ENCODE measurements at regions of chr3 and their contacts with region 1.

Region 1: DNA sequence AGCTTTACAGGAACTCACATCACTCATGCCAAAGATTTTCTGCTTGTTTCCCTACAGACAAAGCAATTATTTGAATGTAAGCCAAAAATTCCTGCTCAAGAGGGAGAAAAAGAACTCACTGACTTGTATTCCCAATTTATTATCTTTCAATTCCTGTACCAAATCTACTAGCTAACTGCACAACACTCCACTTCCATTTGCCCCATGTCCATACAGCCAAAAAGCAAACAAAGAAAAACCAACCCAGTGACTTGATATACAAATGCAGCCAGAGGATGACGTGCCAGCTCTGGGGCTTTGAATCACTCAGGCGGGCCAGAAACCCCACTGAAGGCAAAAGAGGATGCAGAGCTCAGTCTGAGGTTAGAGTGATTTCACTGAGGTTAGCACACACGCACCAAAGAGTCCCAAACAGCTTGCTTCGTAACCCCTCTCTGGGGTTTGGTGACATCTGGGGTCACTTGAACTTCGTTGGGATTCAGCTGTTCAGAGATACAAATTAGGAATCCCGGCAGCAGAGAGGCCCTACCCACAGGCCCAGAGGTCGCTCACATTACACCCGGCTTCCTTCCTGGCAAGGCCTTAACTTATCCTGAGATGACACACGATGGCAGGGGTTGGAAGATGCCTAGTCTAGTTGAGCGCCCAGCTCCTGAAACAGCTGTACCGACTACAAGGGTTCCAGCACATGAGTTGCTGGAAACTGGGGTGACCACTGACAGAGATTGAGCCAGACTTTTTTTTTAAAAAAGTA is 1.6 kb downstream of the RFTN1 start:
- DNase-seq: peak; percentile 92
- H3K4me3 Mint-ChIP-seq: peak overlapping the region; percentile 94
- H3K27ac Mint-ChIP-seq: peak overlapping the region; percentile 96
- H3K4me1 Mint-ChIP-seq: peaks cover 74% of the 10 kb centered on the region
- H3K27me3 Mint-ChIP-seq: no peaks in the 10 kb centered on the region

Region 2: DNA sequence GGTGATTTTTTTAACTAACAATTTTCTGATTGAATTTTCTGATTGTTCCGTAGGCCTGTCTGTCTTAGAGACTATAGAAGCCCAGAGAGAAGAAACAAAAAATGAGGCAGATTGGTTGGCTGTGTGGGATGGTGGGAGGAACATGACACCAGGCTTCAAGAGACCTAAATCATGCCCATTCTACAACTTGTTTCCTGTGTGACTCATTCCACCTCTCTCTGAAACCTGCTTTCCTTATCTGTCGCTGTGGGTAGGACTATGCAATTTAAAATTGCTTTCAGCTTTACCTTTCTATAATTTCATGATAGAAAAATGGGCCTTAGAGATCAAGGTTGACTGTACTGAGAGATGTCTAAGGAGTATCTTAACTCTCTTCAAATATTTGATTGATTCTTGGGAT is 202.3 kb before region 1 on chr3:
- CTCF ChIA-PET with region 1: interaction called, 3 read pairs
- POLR2A ChIA-PET with region 1: interaction called, 7 read pairs
- intact Hi-C with region 1: loop called (anchors 1 kb)
- DNase-seq: peak; percentile 76
- H3K4me3 Mint-ChIP-seq: peak overlapping the region; percentile 33
- H3K27ac Mint-ChIP-seq: peak overlapping the region; percentile 84
- H3K4me1 Mint-ChIP-seq: peaks cover 91% of the 10 kb centered on the region
- H3K27me3 Mint-ChIP-seq: no peaks in the 10 kb centered on the region

Region 3: GRCh38 chr3:16399473-16399872 is 112.4 kb before region 1 on chr3:
- CTCF ChIA-PET with region 1: no interaction called
- POLR2A ChIA-PET with region 1: no interaction called
- intact Hi-C with region 1: no loop called
- DNase-seq: no peak
- H3K4me3 Mint-ChIP-seq: no peak overlapping the region
- H3K27ac Mint-ChIP-seq: no peak overlapping the region
- H3K4me1 Mint-ChIP-seq: peaks cover 22% of the 10 kb centered on the region
- H3K27me3 Mint-ChIP-seq: no peaks in the 10 kb centered on the region

Region 4: DNA sequence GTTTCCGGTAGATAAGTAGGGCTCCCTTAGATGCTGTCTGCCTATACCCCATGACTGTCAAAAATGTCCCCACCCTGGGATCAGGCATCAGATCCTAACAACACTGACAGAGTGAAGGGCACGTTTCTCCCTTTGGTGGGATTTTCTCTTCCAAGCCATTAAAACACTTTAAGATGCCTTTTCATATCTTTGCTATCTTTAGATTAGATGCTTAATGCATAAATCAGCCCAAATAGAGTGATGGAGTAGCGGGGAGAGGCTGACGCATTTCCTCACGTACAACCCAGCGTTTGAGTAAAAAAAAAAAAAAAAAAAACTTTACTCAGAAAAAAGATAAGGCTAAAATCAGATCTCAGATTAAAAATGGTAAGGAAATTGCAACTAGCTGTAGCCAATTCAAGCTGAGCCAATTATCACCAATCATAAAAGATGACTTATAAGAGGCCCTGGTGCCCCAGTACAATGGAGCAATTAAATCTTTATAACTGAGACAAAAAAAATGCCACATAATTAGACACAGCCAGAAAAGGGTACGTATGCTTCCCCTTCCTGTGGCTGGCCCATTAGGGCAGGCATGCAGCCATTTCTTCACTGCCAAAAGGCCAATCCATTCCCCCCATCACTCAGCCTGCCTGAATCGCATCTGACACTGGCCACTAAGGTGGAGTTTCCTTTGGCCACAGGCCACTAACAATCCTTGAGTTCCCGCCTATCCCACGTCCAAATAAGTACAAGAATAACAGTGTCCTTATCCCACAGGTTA is 43.3 kb before region 1 on chr3:
- CTCF ChIA-PET with region 1: no interaction called
- POLR2A ChIA-PET with region 1: no interaction called
- intact Hi-C with region 1: loop called (anchors 2 kb)
- DNase-seq: no peak
- H3K4me3 Mint-ChIP-seq: peak overlapping the region; percentile 17
- H3K27ac Mint-ChIP-seq: peak overlapping the region; percentile 74
- H3K4me1 Mint-ChIP-seq: peaks cover 50% of the 10 kb centered on the region
- H3K27me3 Mint-ChIP-seq: no peaks in the 10 kb centered on the region

Region 5: DNA sequence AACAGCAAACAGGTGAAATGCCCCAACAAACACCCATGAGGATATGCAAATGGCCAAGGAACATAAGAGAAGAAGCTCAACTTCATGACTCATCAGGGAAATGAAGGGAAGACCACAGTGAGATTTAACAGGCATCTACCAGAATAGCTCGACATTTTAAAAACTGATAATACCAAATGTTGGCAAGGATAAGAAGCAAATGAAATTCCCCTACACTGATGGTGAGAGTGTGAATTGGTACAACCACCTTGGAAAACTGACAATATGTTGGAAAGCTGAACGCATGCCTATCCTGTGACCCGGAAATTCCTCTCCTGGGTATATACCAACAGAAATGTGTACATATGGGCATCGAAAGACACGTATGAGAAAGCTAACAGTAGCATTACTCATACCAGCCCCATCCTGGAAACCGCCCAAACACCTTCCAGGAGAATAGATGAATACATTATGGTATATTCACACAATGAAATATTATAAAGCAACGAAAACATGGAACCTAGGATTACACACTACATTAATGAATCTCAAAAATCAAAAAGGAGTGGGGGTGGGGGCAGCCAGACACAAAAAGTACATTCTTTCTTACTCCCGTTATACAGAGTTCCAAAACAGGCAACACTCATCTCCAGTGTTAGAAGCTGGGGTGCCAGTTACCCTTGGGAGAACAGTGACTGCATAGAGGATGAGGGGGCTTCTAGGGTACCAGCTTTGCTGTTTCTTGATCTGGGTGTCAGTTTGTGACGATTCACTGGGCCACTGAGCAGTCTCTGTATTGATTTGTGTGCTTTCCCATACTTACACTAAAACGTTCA is 15.2 kb before region 1 on chr3:
- CTCF ChIA-PET with region 1: interaction called, 8 read pairs
- POLR2A ChIA-PET with region 1: interaction called, 6 read pairs
- intact Hi-C with region 1: loop called (anchors 1 kb)
- DNase-seq: peak; percentile 31
- H3K4me3 Mint-ChIP-seq: no peak overlapping the region
- H3K27ac Mint-ChIP-seq: peak overlapping the region; percentile 50
- H3K4me1 Mint-ChIP-seq: peaks cover 57% of the 10 kb centered on the region
- H3K27me3 Mint-ChIP-seq: no peaks in the 10 kb centered on the region

Region 6: DNA sequence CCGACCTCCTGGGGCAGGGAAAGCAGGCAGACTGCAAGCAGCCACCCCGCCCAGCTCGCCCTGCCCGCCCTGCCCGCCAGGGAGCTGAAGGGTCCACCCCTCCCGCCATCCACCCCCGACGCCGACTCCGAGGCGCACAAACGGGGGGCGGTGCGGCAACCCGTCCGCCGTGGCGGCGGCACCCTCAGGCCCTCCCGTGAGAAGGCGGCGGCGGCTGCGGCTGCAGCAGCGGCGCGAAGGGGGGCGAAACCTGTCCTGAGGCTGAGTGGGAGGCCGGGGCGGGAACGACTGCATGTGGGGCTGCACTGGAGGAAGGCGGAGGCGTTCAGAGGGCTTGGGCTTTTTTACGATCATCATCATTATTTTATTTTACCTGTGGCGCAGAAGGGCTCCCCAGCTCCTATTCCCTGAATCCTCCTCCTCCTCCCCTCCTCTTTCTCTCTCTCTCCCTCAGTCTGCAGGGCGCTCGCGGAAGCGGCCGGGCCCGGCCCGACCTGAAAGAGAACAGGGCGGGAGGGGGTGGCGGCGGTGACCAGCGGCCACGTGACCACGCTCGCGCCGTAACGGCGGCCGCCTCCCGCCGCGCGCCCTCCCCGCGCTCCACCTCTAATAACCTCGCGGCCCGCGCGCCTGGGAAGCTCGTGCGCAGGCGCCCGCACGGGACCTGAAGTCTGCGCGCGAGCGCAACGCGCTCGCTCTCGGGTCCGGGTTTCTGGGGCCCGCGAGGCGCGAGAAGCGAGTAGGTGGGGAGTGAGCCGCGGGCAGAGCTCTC is 1230.4 kb after region 1 on chr3 and contains the start of gene TBC1D5:
- CTCF ChIA-PET with region 1: no interaction called
- POLR2A ChIA-PET with region 1: no interaction called
- intact Hi-C with region 1: loop called (anchors 5 kb)
- DNase-seq: peak; percentile 96
- H3K4me3 Mint-ChIP-seq: peak within 1 kb of the TSS; percentile 94
- H3K27ac Mint-ChIP-seq: peak within 1 kb of the TSS; percentile 97
- H3K4me1 Mint-ChIP-seq: peaks cover 36% of the 10 kb centered on the region
- H3K27me3 Mint-ChIP-seq: no peaks in the 10 kb centered on the region
- total RNA-seq, gene TBC1D5: 49.2 to 53.7 TPM

Measured in activated CD4-positive, alpha-beta memory T cell treated with anti-CD3 and anti-CD28 coated beads for 36 hours (primary cell).